Mucosa of descending colon (tissue), 3 donors: ENCODE measurements at regions of chr11 and their contacts with region 1.

Region 1: GRCh38 chr11:2885676-2886081 is at the start of gene CDKN1C:
- DNase-seq: peak; percentile 87 to 91 (median 91)
- ATAC-seq: peak; percentile 88
- H3K4me3 ChIP-seq: peak within 1 kb of the TSS; percentile 34
- H3K4me1 ChIP-seq: peaks cover 7% of the 10 kb centered on the region
- CTCF ChIP-seq: no peak
- total RNA-seq, gene CDKN1C: 3.0 to 40.3 (median 10.2) TPM

Region 2: GRCh38 chr11:2532704-2533586 is 352.7 kb before region 1 on chr11:
- intact Hi-C with region 1: loop called (anchors 2 kb)
- DNase-seq: peak; percentile 93 to 95 (median 94)
- ATAC-seq: peak; percentile 87
- H3K4me3 ChIP-seq: no peak overlapping the region
- H3K4me1 ChIP-seq: peaks cover 23% of the 10 kb centered on the region
- CTCF ChIP-seq: peak; percentile 98

Region 3: DNA sequence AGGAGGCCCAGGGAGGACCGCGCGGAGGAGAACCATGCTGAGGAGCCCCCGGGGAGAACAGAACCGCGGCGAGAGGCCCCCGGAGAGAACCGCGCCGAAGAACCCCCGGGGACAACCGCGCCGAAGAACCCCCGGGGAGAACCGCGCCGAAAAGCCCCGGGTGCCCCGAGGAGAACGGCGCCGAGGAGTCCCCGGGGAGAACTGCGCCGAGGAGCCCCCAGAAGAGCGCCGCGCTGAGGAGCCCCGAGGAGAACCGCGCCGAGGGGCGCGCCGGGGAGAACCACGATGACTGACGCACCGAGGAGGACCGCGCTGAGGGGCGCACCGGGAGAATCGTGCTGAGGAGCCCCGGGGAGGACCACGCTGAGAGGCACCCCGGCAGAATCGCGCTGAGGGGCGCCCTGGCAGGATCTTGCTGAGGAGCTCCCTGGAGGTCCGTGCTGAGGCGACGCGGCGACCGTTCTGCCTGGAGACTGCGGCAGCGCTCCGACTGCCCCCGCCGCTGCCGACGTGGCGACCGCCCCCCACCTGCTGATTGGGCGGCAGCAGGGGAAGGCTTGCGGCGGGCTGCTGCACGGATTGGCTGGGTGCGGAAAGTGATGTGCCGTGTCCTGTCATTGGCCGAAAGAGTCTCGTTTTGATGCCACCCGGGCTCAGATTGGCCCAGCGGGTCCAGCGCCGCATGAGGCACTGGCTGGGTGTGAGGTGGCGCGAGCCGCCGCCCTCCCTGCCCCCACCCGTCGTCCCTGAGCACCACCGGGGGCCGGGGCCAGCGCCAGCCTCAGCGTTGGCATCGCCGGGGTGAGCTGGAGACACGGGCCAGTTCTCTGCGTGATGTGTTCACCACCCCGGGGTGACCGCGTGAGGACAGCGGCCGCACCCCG is 185.9 kb before region 1 on chr11 and contains the start of gene KCNQ1OT1:
- intact Hi-C with region 1: loop called in 1 of 2 experiments (anchors 10 kb)
- DNase-seq: peak; percentile 89 to 93 (median 92)
- ATAC-seq: peak; percentile 93
- H3K4me3 ChIP-seq: peak within 1 kb of the TSS; percentile 46
- H3K4me1 ChIP-seq: peaks cover 4% of the 10 kb centered on the region
- CTCF ChIP-seq: no peak
- total RNA-seq, gene KCNQ1OT1: 1.5 to 1.7 (median 1.7) TPM

Region 4: DNA sequence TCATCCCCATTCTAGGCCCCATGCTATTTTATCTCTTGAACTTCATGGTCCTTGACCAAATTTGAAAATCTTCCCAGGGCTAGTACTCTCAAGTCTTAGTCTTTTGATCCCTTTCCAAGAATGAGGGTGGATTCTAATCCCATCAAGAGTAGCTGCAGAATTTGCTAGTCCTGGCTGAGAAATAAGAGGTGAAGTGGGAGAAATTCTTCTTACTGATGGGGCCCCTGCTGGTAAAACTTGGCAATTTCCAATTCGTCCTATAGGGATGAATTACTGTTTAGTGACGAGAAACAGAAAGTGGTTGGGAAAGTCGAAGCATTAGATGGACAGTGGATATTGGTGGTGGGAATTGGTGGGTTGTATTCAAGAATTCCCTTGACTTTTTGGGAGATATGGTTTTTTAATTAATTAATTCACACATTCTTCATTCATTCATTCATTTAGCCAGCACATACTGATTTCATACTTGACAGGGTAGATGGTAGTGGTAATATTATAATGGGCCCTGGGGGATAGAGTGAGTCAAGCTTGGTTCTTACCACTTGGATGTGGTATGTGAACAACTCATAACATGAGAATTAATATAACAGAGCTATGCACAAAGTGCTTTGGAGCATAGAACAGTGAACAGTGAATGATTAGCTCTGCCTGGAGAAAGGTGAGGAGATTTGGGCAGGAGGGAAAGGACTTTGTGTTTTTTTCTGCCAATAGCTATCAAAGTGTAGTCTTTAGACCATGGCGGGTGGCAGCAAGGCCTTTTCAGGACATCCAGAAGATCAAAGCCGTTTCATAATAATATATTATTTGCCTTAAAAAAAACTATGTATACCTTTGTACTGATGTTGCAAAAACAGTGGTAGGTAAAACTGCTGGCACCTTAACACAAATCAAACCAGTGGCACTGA is 1073.6 kb after region 1 on chr11:
- intact Hi-C with region 1: no loop called
- DNase-seq: peak in 1 of 3 donors; percentile 24
- ATAC-seq: peak; percentile 11
- H3K4me3 ChIP-seq: no peak overlapping the region
- H3K4me1 ChIP-seq: no peaks in the 10 kb centered on the region
- CTCF ChIP-seq: no peak